GM10248 (cell line): ENCODE measurements at regions of chr15 and their contacts with region 1.

Region 1: DNA sequence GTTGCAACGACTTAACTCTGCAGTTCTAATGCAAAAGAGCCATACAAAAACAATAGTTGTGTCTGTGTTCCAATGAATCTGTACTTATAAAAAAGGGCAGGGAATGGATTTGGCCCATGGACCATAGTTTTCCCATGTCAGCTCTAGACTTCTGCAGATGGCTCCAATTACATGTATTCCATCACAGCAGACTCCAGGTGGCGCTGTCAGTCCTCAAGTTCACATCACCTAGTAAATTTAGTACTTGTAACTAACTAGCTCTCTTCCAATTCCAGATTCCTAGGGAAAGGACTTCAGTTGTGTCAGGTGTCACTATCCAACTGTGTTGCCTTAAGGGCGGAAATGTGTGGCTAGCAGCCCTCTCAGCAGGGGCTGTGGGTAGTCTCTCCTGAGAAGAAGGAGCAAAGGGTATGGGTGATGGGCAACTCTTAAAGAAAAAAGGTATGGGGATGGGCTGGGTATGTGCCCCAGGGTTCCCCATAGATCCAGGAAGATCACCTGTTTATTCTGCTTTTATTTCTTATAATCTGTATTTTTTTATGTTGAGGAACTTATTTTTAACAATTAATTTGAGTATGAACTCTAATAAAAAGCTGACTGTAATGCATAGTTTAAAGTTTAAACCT is 36.2 kb downstream of the BBS4 start:
- DNase-seq: peak; percentile 49
- CTCF ChIP-seq: peak; percentile 80

Region 2: GRCh38 chr15:72365844-72366243 is 356.3 kb before region 1 on chr15:
- CTCF ChIA-PET with region 1: no interaction called
- POLR2A ChIA-PET with region 1: no interaction called
- DNase-seq: peak; percentile 63
- CTCF ChIP-seq: no peak

Region 3: DNA sequence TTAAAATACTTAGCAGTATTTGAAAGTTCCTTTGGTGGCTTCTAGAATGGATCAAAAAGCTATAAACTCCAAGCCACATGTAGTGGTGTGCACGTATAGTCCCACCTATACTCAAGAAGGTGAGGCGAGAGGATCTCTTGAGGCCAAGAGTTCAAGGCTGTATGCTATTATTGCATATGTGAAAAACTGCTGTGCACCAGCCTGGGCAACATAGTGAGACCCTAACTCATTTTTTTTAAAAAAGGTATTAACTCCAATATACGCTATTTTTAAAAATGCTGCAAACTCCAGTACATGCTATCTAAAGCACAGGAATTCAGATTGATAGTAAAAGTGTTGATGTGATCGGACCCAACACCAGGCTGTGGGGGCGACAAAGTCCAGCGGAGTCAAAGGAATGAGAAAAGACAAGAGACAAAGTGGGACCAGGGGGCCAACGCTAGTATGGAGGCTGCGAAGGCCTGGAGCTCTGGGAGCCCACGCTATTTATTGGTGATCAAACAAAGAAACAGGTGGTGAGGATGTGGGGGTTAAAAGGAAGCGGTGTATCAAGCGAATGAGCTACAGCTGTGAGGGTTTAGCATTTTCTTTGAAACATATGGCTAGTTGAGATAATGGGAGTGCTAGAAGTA is 181.5 kb before region 1 on chr15:
- CTCF ChIA-PET with region 1: no interaction called
- POLR2A ChIA-PET with region 1: no interaction called
- DNase-seq: no peak
- CTCF ChIP-seq: no peak

Region 4: GRCh38 chr15:72706266-72706665 is 15.9 kb before region 1 on chr15:
- CTCF ChIA-PET with region 1: interaction called, 44 read pairs
- POLR2A ChIA-PET with region 1: no interaction called
- DNase-seq: no peak
- CTCF ChIP-seq: no peak

Region 5: DNA sequence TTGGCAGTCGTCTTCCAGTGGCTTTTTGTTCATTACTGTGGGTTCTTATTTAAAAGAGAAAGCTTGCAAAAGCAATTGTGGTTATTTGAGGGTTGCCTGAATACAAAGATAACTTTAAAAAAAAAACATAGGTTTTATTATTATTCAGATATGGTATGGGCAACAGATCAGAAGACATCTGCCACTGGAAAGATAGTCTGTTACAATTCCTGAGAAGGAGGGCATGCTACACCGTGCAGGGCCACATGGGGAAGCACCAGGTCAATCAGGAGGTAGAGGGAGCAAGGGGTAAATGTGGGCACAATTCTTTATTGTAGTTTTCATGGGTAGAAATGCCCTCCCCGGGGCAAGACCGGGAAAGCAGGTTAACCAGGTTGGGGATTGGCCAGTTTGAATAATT is 10.3 kb after region 1 on chr15:
- CTCF ChIA-PET with region 1: interaction called, 74 read pairs
- POLR2A ChIA-PET with region 1: no interaction called
- DNase-seq: no peak
- CTCF ChIP-seq: no peak

Region 6: GRCh38 chr15:72740219-72740618 is 18.0 kb after region 1 on chr15:
- CTCF ChIA-PET with region 1: interaction called, 74 read pairs
- POLR2A ChIA-PET with region 1: no interaction called
- DNase-seq: peak; percentile 60
- CTCF ChIP-seq: no peak

Region 7: DNA sequence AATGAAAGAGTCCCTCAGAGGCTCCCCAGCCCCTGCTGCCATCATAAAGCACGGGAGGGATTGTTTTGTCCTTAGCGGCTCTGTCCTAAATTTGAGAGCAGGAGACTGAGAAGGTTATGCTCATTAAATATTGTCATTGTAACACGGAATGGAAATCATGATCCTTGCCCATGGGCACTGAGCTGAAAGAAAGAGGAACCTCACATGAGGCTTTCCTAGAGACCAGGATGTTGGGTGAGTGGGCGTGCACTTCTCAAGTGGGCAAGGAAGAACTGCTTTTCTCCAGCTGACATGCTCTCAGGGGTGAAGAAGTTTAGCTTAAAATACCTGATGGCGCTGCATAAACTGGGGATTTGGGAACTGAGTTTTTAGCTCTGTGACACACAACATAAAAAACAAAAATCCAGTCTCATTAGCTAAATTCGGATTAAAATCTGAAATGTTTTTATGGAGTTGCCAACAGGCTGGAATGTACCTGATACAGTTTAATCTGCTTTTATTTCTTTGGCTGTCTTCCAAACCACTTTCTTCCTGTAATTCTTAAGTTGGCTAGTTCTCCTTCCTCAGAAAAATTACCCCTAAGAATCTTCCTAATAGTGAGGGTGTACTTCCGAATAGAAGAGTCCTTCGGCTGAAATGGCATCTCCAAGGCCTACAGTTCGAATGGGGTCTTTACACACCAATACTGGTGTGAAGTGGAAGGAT is 29.7 kb after region 1 on chr15:
- CTCF ChIA-PET with region 1: interaction called, 28 read pairs
- POLR2A ChIA-PET with region 1: no interaction called
- DNase-seq: no peak
- CTCF ChIP-seq: no peak

Region 8: DNA sequence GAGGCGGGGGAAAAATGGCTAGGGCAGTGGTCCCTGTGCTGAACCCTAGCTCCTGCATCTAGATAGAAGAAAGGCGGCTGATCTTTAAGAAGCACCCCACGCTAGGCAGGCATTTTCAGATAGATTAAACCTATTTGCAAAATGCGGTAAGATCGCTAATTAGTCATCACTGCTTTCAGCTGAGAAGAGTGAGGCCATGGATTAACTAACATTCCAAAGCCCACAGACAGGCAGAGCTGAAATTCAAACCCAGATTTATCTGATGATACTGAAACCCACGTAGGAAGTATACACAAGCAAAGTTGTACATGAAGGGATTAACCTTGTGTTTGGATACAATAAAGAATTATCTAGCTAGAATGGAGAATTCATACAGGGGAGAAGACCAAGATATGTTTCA is 56.6 kb after region 1 on chr15:
- CTCF ChIA-PET with region 1: interaction called, 11 read pairs
- POLR2A ChIA-PET with region 1: no interaction called
- DNase-seq: no peak
- CTCF ChIP-seq: no peak

Region 9: GRCh38 chr15:73081321-73081958 is 359.3 kb after region 1 on chr15:
- CTCF ChIA-PET with region 1: interaction called, 28 read pairs
- POLR2A ChIA-PET with region 1: no interaction called
- DNase-seq: no peak
- CTCF ChIP-seq: peak; percentile 53